WTC11 (cell line): ENCODE measurements at regions of chr3 and their contacts with region 1.

Region 1: GRCh38 chr3:186241910-186242821 is 119.9 kb downstream of the DGKG start:
- DNase-seq: peak; percentile 83
- ATAC-seq: peak; percentile 95
- H3K4me3 Mint-ChIP-seq: no peak overlapping the region
- H3K27ac Mint-ChIP-seq: no peak overlapping the region
- H3K4me1 Mint-ChIP-seq: peaks cover 25% of the 10 kb centered on the region
- H3K27me3 Mint-ChIP-seq: no peaks in the 10 kb centered on the region
- CTCF ChIP-seq: peak; percentile 25; the same call in 1 of the 2 replicates

Region 2: GRCh38 chr3:185976977-185977678 is 265.0 kb before region 1 on chr3:
- CTCF ChIA-PET with region 1: interaction called, 34 read pairs
- POLR2A ChIA-PET with region 1: no interaction called
- DNase-seq: peak; percentile 90
- ATAC-seq: peak; percentile 94
- H3K4me3 Mint-ChIP-seq: no peak overlapping the region
- H3K27ac Mint-ChIP-seq: no peak overlapping the region
- H3K4me1 Mint-ChIP-seq: no peaks in the 10 kb centered on the region
- H3K27me3 Mint-ChIP-seq: no peaks in the 10 kb centered on the region
- CTCF ChIP-seq: peak; percentile 92

Region 3: GRCh38 chr3:186002884-186003472 is 239.2 kb before region 1 on chr3:
- CTCF ChIA-PET with region 1: interaction called, 33 read pairs
- POLR2A ChIA-PET with region 1: no interaction called
- DNase-seq: peak; percentile 36
- ATAC-seq: peak; percentile 94
- H3K4me3 Mint-ChIP-seq: no peak overlapping the region
- H3K27ac Mint-ChIP-seq: no peak overlapping the region
- H3K4me1 Mint-ChIP-seq: no peaks in the 10 kb centered on the region
- H3K27me3 Mint-ChIP-seq: no peaks in the 10 kb centered on the region
- CTCF ChIP-seq: 0 out of 2 replicates have a peak, but pooled peaks have one; percentile 31

Region 4: GRCh38 chr3:186097663-186098451 is 144.3 kb before region 1 on chr3:
- CTCF ChIA-PET with region 1: interaction called, 30 read pairs
- POLR2A ChIA-PET with region 1: no interaction called
- DNase-seq: peak; percentile 80
- ATAC-seq: peak; percentile 82
- H3K4me3 Mint-ChIP-seq: peak overlapping the region; percentile 82
- H3K27ac Mint-ChIP-seq: peak overlapping the region; percentile 98
- H3K4me1 Mint-ChIP-seq: peaks cover 82% of the 10 kb centered on the region
- H3K27me3 Mint-ChIP-seq: no peaks in the 10 kb centered on the region
- CTCF ChIP-seq: no peak

Region 5: GRCh38 chr3:186220911-186221645 is 21.1 kb before region 1 on chr3:
- CTCF ChIA-PET with region 1: interaction called, 14 read pairs
- POLR2A ChIA-PET with region 1: no interaction called
- DNase-seq: peak; percentile 35
- ATAC-seq: peak; percentile 73
- H3K4me3 Mint-ChIP-seq: no peak overlapping the region
- H3K27ac Mint-ChIP-seq: no peak overlapping the region
- H3K4me1 Mint-ChIP-seq: peaks cover 27% of the 10 kb centered on the region
- H3K27me3 Mint-ChIP-seq: no peaks in the 10 kb centered on the region
- CTCF ChIP-seq: no peak

Region 6: DNA sequence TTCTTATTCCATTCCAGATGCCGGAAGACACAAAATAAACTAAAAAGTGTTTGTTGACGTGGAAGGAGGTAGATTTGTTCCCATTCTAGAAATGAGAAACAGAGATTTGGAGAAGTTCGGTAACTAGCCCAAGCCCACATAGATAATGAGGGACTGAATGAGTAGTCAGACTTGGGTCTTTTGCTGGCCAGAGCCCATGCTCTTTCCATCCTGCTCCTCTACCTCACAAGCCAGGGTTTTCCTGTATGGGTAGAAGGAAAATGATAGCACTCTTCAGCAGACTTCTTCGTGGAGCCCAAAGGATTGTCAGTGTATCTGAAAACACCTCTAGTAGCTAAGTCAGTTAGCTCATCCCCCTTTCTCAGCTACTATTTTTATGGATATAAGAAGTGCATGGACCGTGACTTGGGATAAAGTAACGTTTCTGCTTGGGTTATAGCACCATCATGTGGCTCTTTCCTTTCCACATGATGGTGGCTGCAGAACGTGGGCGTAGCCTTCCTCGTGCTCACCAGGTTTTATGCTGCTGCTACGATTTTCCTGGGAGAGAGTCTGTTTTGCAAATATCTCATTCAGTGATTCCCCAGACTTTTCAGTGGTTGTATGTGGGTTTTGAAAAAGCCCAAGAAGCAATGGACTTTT is 35.2 kb after region 1 on chr3:
- CTCF ChIA-PET with region 1: interaction called, 20 read pairs
- POLR2A ChIA-PET with region 1: no interaction called
- DNase-seq: no peak
- ATAC-seq: peak; percentile 98
- H3K4me3 Mint-ChIP-seq: no peak overlapping the region
- H3K27ac Mint-ChIP-seq: no peak overlapping the region
- H3K4me1 Mint-ChIP-seq: peaks cover 11% of the 10 kb centered on the region
- H3K27me3 Mint-ChIP-seq: no peaks in the 10 kb centered on the region; the same call in 1 of the 2 replicates
- CTCF ChIP-seq: no peak